ENCODE measurements at regions of chr2 and their contacts with region 1.

Region 1: GRCh38 chr2:207156451-207157161 is 9.1 kb downstream of the KLF7 start:
- DNase-seq: no peak
- ATAC-seq: peak; percentile 22
- H3K4me3 ChIP-seq: no peak overlapping the region
- H3K27ac ChIP-seq: no peak overlapping the region
- H3K4me1 ChIP-seq: peaks cover 29% of the 10 kb centered on the region
- H3K27me3 ChIP-seq: no peaks in the 10 kb centered on the region
- CTCF ChIP-seq: no peak
- POLR2A ChIP-seq: no peak
- RAD21 ChIP-seq: no peak

Region 2: GRCh38 chr2:206846981-206847834 is 309.4 kb before region 1 on chr2:
- CTCF ChIA-PET with region 1: no interaction called
- POLR2A ChIA-PET with region 1: interaction called, 12 read pairs
- dilution Hi-C with region 1: no loop called
- in situ Hi-C with region 1: no loop called
- intact Hi-C with region 1: no loop called
- DNase-seq: no peak
- ATAC-seq: no peak
- H3K4me3 ChIP-seq: no peak overlapping the region
- H3K27ac ChIP-seq: no peak overlapping the region
- H3K4me1 ChIP-seq: no peaks in the 10 kb centered on the region
- H3K27me3 ChIP-seq: no peaks in the 10 kb centered on the region
- CTCF ChIP-seq: no peak
- POLR2A ChIP-seq: no peak
- RAD21 ChIP-seq: no peak

Region 3: DNA sequence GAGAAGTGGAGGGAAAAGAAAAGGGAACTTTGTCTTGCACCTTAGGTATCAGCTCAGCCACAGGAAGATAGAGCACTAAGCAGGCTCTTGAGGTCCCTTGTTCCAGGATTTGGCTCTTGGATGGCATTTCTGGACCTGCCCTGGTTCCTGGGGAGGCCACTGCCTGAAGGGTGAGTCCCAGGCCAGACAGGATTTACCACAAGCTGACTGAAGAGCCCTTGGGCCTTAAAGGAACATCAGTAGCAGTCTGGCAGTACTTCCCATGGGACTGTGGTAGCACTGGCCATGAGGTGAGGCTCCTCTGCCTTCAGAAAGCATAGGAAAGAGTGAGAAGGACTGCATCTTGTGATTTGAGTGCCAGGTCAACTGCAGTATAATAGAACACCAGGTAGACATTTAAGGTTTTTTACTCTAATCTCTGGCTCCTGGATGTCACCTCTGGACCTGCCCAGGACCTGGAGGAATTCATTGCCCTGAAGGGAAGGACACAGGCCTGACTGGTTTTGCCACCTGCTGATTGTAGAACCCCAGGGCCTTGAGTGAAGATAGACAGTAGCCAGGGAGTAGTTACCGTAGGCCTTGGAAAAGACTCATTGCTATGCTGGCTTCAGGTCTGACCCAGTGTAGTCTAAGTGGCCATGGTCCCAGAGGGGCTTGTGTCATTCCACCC is 218.7 kb after region 1 on chr2:
- CTCF ChIA-PET with region 1: no interaction called
- POLR2A ChIA-PET with region 1: no interaction called
- dilution Hi-C with region 1: no loop called
- in situ Hi-C with region 1: no loop called
- intact Hi-C with region 1: no loop called
- DNase-seq: no peak
- ATAC-seq: no peak
- H3K4me3 ChIP-seq: no peak overlapping the region
- H3K27ac ChIP-seq: no peak overlapping the region
- H3K4me1 ChIP-seq: no peaks in the 10 kb centered on the region
- H3K27me3 ChIP-seq: no peaks in the 10 kb centered on the region
- CTCF ChIP-seq: no peak
- POLR2A ChIP-seq: no peak
- RAD21 ChIP-seq: no peak